Activated CD8-positive, alpha-beta T cell treated with anti-CD3 and anti-CD28 coated beads for 36 hours (primary cell): ENCODE measurements at regions of chr2 and their contacts with region 1.

Region 1: GRCh38 chr2:176653479-176654443 is 384.5 kb downstream of the MTX2 start:
- DNase-seq: peak; percentile 64
- ATAC-seq: peak; percentile 71
- H3K4me3 Mint-ChIP-seq: no peak overlapping the region
- H3K27ac Mint-ChIP-seq: no peak overlapping the region
- H3K4me1 Mint-ChIP-seq: peaks cover 16% of the 10 kb centered on the region
- H3K27me3 Mint-ChIP-seq: peaks cover 31% of the 10 kb centered on the region
- CTCF ChIP-seq: peak; percentile 63

Region 2: GRCh38 chr2:176454893-176455811 is 198.6 kb before region 1 on chr2:
- CTCF ChIA-PET with region 1: interaction called, 27 read pairs
- POLR2A ChIA-PET with region 1: no interaction called
- intact Hi-C with region 1: no loop called
- DNase-seq: peak; percentile 94
- ATAC-seq: peak; percentile 83
- H3K4me3 Mint-ChIP-seq: no peak overlapping the region
- H3K27ac Mint-ChIP-seq: no peak overlapping the region
- H3K4me1 Mint-ChIP-seq: peaks cover 2% of the 10 kb centered on the region
- H3K27me3 Mint-ChIP-seq: peaks cover 25% of the 10 kb centered on the region
- CTCF ChIP-seq: peak; percentile 85

Region 3: GRCh38 chr2:176638167-176639015 is 15.4 kb before region 1 on chr2:
- CTCF ChIA-PET with region 1: interaction called, 61 read pairs
- POLR2A ChIA-PET with region 1: no interaction called
- intact Hi-C with region 1: no loop called
- DNase-seq: peak; percentile 71
- ATAC-seq: peak; percentile 87
- H3K4me3 Mint-ChIP-seq: peak overlapping the region; percentile 60
- H3K27ac Mint-ChIP-seq: no peak overlapping the region
- H3K4me1 Mint-ChIP-seq: peaks cover 6% of the 10 kb centered on the region
- H3K27me3 Mint-ChIP-seq: peaks cover 52% of the 10 kb centered on the region
- CTCF ChIP-seq: peak; percentile 85

Region 4: GRCh38 chr2:176664478-176664877 is 10.7 kb after region 1 on chr2:
- CTCF ChIA-PET with region 1: interaction called, 51 read pairs
- POLR2A ChIA-PET with region 1: no interaction called
- intact Hi-C with region 1: no loop called
- DNase-seq: no peak
- ATAC-seq: no peak
- H3K4me3 Mint-ChIP-seq: no peak overlapping the region
- H3K27ac Mint-ChIP-seq: no peak overlapping the region
- H3K4me1 Mint-ChIP-seq: no peaks in the 10 kb centered on the region
- H3K27me3 Mint-ChIP-seq: peaks cover 25% of the 10 kb centered on the region
- CTCF ChIP-seq: no peak

Region 5: DNA sequence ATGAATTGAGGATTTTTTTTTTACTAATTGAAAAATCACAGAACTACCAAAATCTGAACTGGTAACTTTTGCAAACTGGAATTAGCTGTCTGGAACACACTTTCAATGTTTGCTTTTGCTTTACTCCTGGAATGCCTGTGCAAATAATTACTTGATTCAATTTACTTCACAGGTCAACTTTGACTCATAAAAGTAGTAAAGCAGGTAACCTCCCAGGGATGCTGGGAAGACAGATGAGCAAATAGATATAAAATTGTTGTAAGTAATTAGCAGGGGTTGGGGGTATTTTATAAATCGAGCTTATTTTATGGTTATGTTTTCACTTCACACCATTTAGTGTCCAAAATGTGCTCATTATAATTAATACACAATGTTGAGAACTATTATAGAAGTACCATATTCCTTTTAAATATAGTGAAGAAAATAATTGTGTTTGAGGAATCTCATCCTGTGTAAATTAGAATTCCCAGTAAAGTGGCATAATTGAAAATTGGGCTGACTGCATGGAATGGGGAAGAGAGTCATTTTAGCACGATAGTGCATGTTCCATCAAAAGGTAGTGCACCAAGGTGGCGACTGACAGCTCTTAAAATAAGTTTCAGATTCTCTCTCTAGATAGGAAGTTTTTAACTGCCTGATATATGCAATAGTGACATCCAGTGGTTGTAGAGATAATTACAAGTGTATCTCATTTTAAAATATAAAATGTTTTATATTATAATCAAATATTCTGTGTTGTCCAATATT is 160.7 kb after region 1 on chr2:
- CTCF ChIA-PET with region 1: interaction called, 21 read pairs
- POLR2A ChIA-PET with region 1: no interaction called
- intact Hi-C with region 1: loop called (anchors 10 kb)
- DNase-seq: peak; percentile 16
- ATAC-seq: peak; percentile 60
- H3K4me3 Mint-ChIP-seq: no peak overlapping the region
- H3K27ac Mint-ChIP-seq: no peak overlapping the region
- H3K4me1 Mint-ChIP-seq: peaks cover 34% of the 10 kb centered on the region
- H3K27me3 Mint-ChIP-seq: no peaks in the 10 kb centered on the region
- CTCF ChIP-seq: peak; percentile 81